OCI-LY7 (cell line): ENCODE measurements at regions of chr14 and their contacts with region 1.

Region 1: DNA sequence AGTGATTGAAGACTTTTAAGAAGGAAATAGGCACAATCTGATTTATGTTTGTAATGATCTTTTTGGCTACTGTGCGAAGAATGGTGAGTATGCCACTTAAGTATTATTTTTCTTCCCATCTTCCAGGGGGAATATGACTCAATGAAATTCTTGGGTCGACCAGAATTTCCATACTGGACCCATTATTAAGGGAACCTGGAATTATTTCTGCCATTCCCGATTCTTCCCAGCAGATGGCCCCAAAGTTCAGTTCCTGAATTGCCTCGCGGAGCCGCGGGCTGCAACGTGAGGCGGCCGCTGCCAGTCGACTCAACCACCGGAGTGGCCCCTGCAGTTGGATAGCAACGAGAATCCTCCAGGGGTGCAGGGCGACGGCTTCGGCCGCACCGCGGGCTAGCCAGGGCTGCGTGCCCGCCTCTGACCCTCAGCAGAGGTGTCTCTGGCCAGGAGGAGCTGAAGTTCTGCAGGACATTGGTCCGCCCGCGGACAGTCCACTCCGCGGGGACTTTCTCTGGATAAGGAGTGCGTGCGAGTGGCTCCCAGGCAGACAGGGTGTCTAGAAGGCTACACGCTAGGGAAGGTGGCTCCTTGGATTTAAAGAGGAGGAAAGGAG is 628 bp upstream of the TSHR start:
- DNase-seq: peak; percentile 88
- H3K4me3 ChIP-seq: peak overlapping the region; percentile 68
- H3K27ac ChIP-seq: peak overlapping the region; percentile 98
- H3K4me1 ChIP-seq: peaks cover 47% of the 10 kb centered on the region
- CTCF ChIP-seq: peak; percentile 94

Region 2: DNA sequence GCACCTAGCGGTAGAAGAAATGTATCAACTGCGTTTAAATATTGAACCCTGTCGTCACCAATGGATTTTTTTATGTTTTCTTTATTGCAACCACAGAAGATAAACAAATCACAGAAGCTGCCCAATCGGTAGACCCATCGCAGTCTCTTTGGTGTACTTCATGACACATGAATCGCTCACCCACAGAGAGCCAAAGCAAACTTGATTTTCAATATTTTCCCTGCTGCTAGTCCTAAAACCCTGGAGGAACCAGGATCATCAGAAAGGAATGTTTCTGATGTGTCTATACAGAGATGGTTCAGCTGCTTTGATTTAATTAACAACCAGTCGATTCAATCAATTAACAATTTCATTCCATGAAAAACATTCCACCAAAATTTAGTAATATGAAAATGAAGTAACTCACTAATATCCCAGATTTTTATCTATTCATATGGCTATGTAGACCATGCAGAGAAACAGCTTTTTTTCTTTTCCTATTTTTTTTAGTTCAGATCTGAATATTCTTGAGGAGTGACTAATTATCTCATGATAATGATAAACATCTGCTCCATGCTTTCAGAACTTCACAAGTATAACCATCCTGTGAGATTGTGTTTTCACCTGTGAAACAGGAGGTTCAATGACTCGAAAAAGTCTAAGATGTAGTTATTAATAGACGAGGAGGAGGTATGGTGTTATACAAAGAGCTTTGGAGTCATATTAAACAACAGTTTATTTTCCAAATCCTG is 789.6 kb before region 1 on chr14:
- CTCF ChIA-PET with region 1: no interaction called
- POLR2A ChIA-PET with region 1: no interaction called
- intact Hi-C with region 1: no loop called
- DNase-seq: no peak
- H3K4me3 ChIP-seq: no peak overlapping the region
- H3K27ac ChIP-seq: no peak overlapping the region
- H3K4me1 ChIP-seq: no peaks in the 10 kb centered on the region
- CTCF ChIP-seq: no peak

Region 3: GRCh38 chr14:80930836-80931389 is 23.9 kb before region 1 on chr14:
- CTCF ChIA-PET with region 1: interaction called, 9 read pairs
- POLR2A ChIA-PET with region 1: interaction called, 60 read pairs
- intact Hi-C with region 1: loop called (anchors 1 kb)
- DNase-seq: peak; percentile 94
- H3K4me3 ChIP-seq: peak overlapping the region; percentile 42
- H3K27ac ChIP-seq: peak overlapping the region; percentile 97
- H3K4me1 ChIP-seq: peaks cover 80% of the 10 kb centered on the region
- CTCF ChIP-seq: no peak

Region 4: DNA sequence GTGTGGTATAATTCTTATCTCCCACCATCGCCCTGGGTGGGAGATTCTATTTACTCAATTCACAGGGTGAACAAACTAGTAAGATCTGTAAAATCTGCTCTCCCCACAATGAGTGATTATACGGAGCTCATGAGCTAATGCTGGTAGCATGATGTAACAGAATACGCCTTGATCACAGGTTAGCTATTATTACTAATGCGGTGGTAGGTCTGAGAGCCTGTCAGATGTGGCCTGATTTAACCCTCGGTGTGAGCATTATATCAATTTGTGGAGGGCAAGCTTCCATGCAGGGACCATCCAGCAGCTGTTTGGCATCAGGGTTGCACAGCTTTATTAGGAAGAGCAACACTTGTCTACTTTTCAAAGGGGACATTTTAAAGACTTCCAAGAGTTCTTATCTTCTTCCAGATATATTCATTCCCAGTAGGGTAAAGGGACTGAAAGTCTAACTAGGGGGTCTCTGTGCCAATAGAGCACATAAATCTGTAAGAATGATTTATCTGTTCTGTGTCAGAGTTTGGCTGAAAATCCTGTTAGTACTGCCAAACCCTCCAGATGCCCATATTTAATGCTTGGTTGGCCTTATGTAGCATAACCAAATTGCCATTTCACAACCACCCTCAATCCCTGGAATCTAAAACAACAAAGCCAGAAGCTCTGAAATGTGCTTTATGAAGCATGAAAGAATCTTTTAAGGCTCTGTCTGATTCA is 19.3 kb after region 1 on chr14:
- CTCF ChIA-PET with region 1: interaction called, 10 read pairs
- POLR2A ChIA-PET with region 1: interaction called, 267 read pairs
- intact Hi-C with region 1: loop called (anchors 1 kb)
- DNase-seq: no peak
- H3K4me3 ChIP-seq: no peak overlapping the region
- H3K27ac ChIP-seq: no peak overlapping the region
- H3K4me1 ChIP-seq: peaks cover 53% of the 10 kb centered on the region
- CTCF ChIP-seq: no peak

Region 5: DNA sequence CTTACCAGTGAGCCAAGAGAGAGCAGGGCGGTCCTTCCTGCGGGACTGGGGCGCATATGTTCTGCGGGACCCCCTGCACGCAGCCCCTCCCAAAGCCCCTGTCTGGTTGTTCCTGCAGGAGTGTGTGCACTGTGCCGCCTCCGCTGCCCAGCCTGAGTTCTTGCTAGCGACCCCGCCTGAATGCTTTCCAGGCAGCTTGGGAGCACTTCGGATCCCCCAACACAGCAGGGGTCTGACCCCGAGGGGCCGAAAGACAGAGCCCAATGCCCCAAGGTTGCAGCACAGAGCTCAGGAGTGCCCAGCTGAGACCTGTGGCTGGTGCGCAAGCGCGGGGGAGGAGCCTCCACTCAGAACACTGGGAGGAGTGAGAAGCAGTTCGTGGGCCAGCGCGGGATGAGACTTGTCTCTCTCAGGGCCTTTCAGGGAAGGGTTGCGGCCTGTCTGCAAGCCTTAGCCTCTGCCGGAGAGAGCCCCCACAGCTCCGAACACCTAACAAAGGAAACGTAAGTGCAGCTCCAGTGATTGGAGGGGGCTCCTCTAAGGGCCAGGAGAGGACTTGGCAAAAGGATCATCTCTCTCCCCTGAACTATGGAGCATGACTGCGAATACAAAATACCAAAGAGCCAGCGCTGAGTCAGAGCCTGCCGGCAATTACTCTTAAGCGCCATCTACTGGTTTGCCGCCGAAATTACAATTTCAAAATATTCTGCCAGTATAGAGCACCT is 215.5 kb after region 1 on chr14:
- CTCF ChIA-PET with region 1: no interaction called
- POLR2A ChIA-PET with region 1: no interaction called
- intact Hi-C with region 1: loop called (anchors 1 kb)
- DNase-seq: peak; percentile 87
- H3K4me3 ChIP-seq: peak overlapping the region; percentile 62
- H3K27ac ChIP-seq: peak overlapping the region; percentile 62
- H3K4me1 ChIP-seq: peaks cover 46% of the 10 kb centered on the region
- CTCF ChIP-seq: peak; percentile 97

Region 6: GRCh38 chr14:81474148-81474492 is 519.3 kb after region 1 on chr14:
- CTCF ChIA-PET with region 1: no interaction called
- POLR2A ChIA-PET with region 1: interaction called, 7 read pairs
- intact Hi-C with region 1: loop called (anchors 1 kb)
- DNase-seq: peak; percentile 55
- H3K4me3 ChIP-seq: peak overlapping the region; percentile 27
- H3K27ac ChIP-seq: peak overlapping the region; percentile 97
- H3K4me1 ChIP-seq: peaks cover 80% of the 10 kb centered on the region
- CTCF ChIP-seq: no peak